Pancreas (tissue), 10 donors: ENCODE measurements at regions of chr22 and their contacts with region 1.

Region 1: GRCh38 chr22:40628354-40629042 is 8.0 kb downstream of the MRTFA start:
- DNase-seq: no peak
- ATAC-seq: peak in 2 of 4 donors; percentile 21 to 44
- H3K4me3 ChIP-seq: no peak overlapping the region
- H3K27ac ChIP-seq: no peak overlapping the region
- H3K4me1 ChIP-seq: no peaks in the 10 kb centered on the region
- H3K27me3 ChIP-seq: no peaks in the 10 kb centered on the region
- CTCF ChIP-seq: no peak

Region 2: GRCh38 chr22:40509401-40510134 is 118.9 kb before region 1 on chr22:
- intact Hi-C with region 1: loop called in 1 of 3 experiments (anchors 10 kb)
- DNase-seq: peak in 4 of 6 donors; percentile 53 to 70 (median 68)
- ATAC-seq: peak; percentile 77 to 85 (median 82)
- H3K4me3 ChIP-seq: peak overlapping the region in 1 of 4 donors; percentile 0
- H3K27ac ChIP-seq: peak overlapping the region; percentile 29 to 92 (median 76)
- H3K4me1 ChIP-seq: peaks cover 54 to 71% (median 68%) of the 10 kb centered on the region in 3 donors
- H3K27me3 ChIP-seq: no peaks in the 10 kb centered on the region
- CTCF ChIP-seq: no peak